Activated CD4-positive, alpha-beta T cell treated with anti-CD3 and anti-CD28 coated beads, Interleukin-2, amount 10 ng/mL, durations not matched to agents 24 days and 14 days (primary cell): ENCODE measurements at regions of chr19 and their contacts with region 1.

Region 1: DNA sequence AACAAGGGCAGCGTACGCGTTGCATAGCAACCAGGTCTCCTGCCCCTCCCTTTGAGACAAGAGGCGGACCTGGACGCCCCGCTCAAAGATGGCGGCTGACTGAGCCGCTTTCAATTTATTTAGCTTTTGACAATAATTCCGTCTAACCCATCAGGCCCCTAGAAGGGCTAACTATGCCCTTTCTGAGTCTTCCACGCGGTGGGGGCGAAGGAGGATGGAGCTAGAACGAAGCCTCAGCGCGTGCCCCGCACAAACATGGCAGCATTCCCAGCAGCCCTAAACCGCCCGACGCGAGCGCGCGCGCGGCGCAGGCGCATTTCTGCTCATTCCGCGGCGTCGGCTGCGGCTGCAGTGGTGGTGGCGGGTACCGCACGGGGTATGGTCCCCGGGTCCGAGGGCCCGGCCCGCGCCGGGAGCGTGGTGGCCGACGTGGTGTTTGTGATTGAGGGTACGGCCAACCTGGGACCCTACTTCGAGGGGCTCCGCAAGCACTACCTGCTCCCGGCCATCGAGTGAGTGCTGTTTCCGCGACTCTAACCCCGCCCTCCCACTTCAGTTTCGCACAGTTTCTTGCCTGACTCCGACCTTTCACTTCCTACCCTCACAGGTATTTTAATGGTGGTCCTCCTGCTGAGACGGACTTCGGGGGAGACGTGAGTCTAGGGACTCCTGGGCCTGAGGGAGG is at the start of gene MED25:
- DNase-seq: peak; percentile 97
- H3K4me3 Mint-ChIP-seq: peak within 1 kb of the TSS; percentile 88
- H3K27ac Mint-ChIP-seq: peak within 1 kb of the TSS; percentile 92
- H3K4me1 Mint-ChIP-seq: peaks cover 18% of the 10 kb centered on the region
- H3K27me3 Mint-ChIP-seq: peaks cover 2% of the 10 kb centered on the region
- total RNA-seq, gene MED25: 49.1 and 51.5 TPM in 2 replicates

Region 2: GRCh38 chr19:49766007-49766937 is 51.8 kb before region 1 on chr19:
- intact Hi-C with region 1: loop called (anchors 1 kb)
- DNase-seq: peak; percentile 100
- H3K4me3 Mint-ChIP-seq: peak overlapping the region; percentile 91
- H3K27ac Mint-ChIP-seq: peak overlapping the region; percentile 92
- H3K4me1 Mint-ChIP-seq: peaks cover 32% of the 10 kb centered on the region
- H3K27me3 Mint-ChIP-seq: no peaks in the 10 kb centered on the region

Region 3: GRCh38 chr19:49850473-49851342 is 32.6 kb after region 1 on chr19 and contains the start of gene PTOV1:
- intact Hi-C with region 1: loop called (anchors 1 kb)
- DNase-seq: peak; percentile 98
- H3K4me3 Mint-ChIP-seq: peak within 1 kb of the TSS; percentile 91
- H3K27ac Mint-ChIP-seq: peak within 1 kb of the TSS; percentile 96
- H3K4me1 Mint-ChIP-seq: peaks cover 38% of the 10 kb centered on the region
- H3K27me3 Mint-ChIP-seq: peaks cover 4% of the 10 kb centered on the region
- total RNA-seq, gene PTOV1: 121 and 124 TPM in 2 replicates

Region 4: GRCh38 chr19:49869441-49870176 is 51.5 kb after region 1 on chr19:
- intact Hi-C with region 1: loop called (anchors 1 kb)
- DNase-seq: peak; percentile 98
- H3K4me3 Mint-ChIP-seq: no peak overlapping the region
- H3K27ac Mint-ChIP-seq: no peak overlapping the region
- H3K4me1 Mint-ChIP-seq: peaks cover 41% of the 10 kb centered on the region
- H3K27me3 Mint-ChIP-seq: no peaks in the 10 kb centered on the region

Region 5: DNA sequence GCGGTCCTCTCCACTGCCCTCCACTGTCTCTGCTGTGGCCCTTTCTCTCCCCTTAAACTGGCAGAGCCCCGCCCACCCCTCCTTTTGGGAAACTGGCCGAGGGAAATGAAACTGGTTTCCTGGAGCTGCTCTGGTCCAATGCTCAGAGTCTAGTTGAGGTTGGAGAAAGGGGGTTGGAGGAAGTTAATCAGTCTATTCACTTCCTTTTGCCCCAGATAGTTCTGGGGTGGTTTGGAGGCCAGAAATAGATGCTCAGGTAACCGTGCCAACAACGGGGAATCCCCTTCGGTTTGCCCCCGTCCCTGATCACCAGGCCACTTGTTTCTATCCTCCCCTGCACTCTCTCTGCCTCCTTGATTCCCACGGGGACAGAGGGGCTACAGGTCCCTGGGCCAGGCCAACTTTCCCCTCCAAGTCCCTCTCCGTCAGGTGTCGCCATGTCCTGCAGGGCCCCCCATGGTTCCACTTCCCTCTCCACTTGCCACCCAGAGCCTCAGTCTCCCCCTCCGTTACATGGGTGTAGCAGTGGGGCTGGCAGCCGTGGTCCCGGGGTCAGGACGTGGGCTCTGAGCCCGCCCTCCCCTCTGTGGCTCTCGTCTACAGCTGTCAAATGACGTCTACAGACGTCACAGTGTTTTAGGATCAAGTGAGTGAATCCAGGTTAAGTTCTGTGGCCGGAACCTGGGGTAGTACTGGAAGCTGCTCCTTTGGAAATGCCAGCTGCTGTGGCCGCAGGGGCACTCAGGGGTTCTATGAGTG is 78.9 kb after region 1 on chr19 and contains the start of gene IL4I1:
- intact Hi-C with region 1: loop called (anchors 1 kb)
- DNase-seq: peak; percentile 88
- H3K4me3 Mint-ChIP-seq: peak within 1 kb of the TSS; percentile 89
- H3K27ac Mint-ChIP-seq: peak within 1 kb of the TSS; percentile 100
- H3K4me1 Mint-ChIP-seq: peaks cover 51% of the 10 kb centered on the region
- H3K27me3 Mint-ChIP-seq: peaks cover 2% of the 10 kb centered on the region
- total RNA-seq, gene IL4I1: 40.4 and 41.4 TPM in 2 replicates

Region 6: DNA sequence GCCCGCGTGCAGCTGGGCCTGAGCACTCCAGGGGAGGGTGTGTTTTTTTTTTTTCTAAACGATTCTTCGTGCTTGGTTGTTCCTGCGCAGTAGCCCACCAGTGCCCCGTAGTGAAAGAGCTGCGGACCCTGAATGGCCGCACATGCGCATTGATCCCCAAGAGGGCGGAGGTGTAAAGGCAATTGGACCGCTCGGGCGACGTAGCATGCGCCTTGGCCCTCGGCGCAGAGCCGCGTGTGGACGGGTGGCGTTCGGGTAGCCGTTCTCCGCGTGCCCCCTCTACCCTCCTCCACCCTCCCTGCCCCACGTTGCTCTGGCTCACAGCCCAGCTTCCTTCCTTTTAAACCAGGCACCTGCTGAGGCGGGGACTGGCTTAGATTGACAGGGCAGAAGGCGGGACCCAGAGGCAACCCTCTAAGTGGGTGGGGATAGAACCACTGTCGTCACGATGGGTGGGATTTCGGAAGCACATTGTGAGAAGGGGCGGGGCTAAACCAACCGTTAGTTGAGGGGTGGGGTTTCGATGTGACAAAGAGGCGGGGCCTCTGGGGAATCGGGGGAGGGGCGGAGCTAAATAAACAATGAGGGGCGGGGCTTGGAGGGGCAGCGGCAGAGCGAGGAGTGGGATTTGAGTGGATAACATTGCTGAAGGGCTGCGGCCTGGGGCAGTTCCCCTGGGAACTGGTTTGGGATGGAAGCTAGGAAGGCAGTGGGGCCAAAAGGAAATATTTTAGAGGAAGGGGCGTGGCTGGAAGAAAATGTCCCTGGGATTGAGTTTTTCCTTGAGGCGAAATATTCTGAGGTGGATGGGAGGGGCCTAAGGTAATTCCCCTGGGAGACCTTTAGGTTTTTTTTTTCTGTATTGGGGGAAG is 111.7 kb after region 1 on chr19:
- intact Hi-C with region 1: loop called (anchors 5 kb)
- DNase-seq: peak; percentile 98
- H3K4me3 Mint-ChIP-seq: peak overlapping the region; percentile 97
- H3K27ac Mint-ChIP-seq: peak overlapping the region; percentile 100
- H3K4me1 Mint-ChIP-seq: peaks cover 54% of the 10 kb centered on the region
- H3K27me3 Mint-ChIP-seq: peaks cover 3% of the 10 kb centered on the region

Region 7: DNA sequence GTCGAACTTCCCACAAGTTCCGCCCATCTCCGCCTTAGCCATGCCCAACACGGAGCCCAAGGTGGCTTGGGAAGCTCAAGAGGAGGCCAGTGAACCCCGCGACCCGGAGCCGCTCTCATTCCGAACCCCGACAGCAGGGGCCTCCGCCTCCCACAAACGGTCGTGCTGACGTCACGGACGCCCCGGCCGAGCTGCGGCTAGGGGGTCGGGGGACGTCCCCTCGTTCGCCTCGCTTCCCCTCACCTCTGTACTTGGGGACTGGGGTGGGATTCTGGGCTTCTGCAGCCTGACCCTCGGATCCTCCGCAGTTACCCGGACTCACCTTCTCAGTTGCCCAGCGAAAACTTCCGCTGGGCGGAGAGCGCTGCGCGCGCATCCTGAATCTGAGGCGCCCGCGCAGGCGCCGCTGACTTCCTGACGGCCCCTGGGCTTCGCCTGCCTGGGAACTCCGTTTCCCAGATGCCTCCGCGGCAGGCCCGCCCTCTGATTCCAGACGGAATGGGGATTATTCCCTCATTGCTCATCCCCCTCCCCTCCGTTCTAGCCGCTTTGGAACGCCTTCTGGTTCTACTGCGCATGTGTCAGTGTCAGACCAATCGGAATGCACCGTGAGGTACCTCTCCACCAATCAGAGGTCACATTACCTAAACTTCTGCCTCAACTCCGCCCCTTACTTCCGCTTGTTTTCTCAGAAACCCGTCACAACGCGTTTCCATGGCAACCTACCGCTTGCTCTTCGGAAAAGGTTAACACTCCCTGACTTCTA is 207.1 kb after region 1 on chr19 and contains the start of gene VRK3:
- intact Hi-C with region 1: loop called (anchors 1 kb)
- DNase-seq: peak; percentile 100
- H3K4me3 Mint-ChIP-seq: peak within 1 kb of the TSS; percentile 95
- H3K27ac Mint-ChIP-seq: peak within 1 kb of the TSS; percentile 99
- H3K4me1 Mint-ChIP-seq: peaks cover 34% of the 10 kb centered on the region
- H3K27me3 Mint-ChIP-seq: peaks cover 2% of the 10 kb centered on the region
- total RNA-seq, gene VRK3: 66.1 and 70.0 TPM in 2 replicates